Activated B cell treated with CpG ODN at 0.5 μM for 24 hours (primary cell): ENCODE measurements at regions of chr11 and their contacts with region 1.

Region 1: GRCh38 chr11:104713401-104713800 is 184.9 kb downstream of the CASP12 start:
- DNase-seq: no peak
- ATAC-seq: no peak
- H3K4me3 Mint-ChIP-seq: no peak overlapping the region
- H3K27ac Mint-ChIP-seq: no peak overlapping the region
- H3K4me1 Mint-ChIP-seq: peaks cover 1% of the 10 kb centered on the region
- H3K27me3 Mint-ChIP-seq: no peaks in the 10 kb centered on the region
- CTCF ChIP-seq: no peak

Region 2: DNA sequence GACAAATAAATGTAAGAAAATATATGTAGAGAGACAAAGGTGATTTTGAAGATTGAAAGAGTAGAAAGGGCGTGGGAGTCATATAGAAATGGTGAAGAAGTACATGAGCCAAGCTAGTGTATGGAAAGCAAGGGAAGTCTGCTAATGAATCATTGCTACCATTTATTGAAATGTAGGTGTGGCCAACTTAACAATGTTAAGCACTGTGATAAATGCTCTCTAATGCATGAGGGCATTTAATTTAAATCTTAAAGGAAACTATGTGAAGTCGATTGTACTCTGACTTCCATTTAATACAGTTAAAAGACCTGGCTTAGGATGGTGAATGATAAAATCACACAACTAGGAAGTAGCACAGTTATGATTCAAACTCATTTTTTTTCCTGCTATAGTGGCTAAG is 35.0 kb before region 1 on chr11:
- CTCF ChIA-PET with region 1: no interaction called
- POLR2A ChIA-PET with region 1: no interaction called
- intact Hi-C with region 1: no loop called
- DNase-seq: no peak
- ATAC-seq: no peak
- H3K4me3 Mint-ChIP-seq: no peak overlapping the region
- H3K27ac Mint-ChIP-seq: no peak overlapping the region
- H3K4me1 Mint-ChIP-seq: no peaks in the 10 kb centered on the region
- H3K27me3 Mint-ChIP-seq: no peaks in the 10 kb centered on the region
- CTCF ChIP-seq: no peak

Region 3: DNA sequence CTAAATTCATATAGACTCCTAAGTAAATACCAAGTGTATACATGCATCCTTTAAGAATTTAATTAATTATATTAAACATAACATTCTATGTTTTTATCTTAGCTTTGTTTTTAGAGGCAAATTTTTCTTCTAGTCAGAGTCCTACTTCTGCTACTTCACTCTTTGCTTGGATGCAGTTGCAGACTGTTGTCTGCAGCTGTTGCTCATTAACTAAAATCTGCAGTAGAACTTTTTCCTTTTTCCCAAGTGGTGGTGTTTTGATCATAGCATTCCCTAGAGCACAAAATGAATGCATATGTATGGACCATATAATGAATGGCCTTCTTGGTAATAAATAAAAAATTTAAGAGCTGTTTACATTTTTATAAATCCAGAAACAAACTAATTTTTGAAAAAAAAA is 13.4 kb before region 1 on chr11:
- CTCF ChIA-PET with region 1: no interaction called
- POLR2A ChIA-PET with region 1: no interaction called
- intact Hi-C with region 1: loop called (anchors 2 kb)
- DNase-seq: no peak
- ATAC-seq: no peak
- H3K4me3 Mint-ChIP-seq: no peak overlapping the region
- H3K27ac Mint-ChIP-seq: no peak overlapping the region
- H3K4me1 Mint-ChIP-seq: peaks cover 7% of the 10 kb centered on the region
- H3K27me3 Mint-ChIP-seq: no peaks in the 10 kb centered on the region
- CTCF ChIP-seq: no peak